PC-3 (cell line): ENCODE measurements at regions of chr1 and their contacts with region 1.

Region 1: DNA sequence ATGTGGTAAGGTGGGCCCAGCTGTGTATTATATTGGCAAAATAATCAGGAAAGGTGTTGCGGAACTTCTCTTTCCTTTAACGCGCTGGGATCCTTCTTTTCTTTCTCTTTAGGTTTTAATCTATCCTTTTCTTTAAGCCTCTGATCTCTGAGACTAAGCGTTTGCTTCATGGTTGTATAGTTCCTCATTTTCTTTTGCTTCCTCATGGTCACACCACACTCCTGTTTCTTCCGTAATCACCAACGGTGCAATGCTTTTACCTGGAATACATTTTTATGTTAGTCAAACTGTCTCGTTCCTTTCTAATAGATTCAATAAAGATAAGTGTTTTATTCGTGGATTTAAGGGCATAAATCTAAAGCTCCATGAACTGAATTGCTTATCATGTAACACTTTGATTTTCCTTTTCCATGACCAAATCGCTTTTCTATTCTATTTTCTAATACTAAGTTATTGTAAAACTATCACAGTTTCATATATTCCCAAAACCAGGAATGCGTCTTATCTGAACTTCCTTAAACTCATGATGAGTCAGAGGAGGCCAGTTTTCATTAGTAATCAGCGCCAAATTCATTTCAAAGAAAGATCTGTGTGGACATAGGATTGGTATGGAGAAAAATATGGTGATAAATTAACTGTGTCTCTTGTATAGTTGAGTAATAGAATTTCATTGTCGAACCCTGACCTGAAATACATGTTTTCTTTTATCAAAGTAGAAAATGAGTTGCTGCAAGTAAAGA is 12.2 kb downstream of the SDCCAG8 start:
- DNase-seq: peak; percentile 99
- ATAC-seq: peak; percentile 88
- H3K4me3 ChIP-seq: peak overlapping the region; percentile 50
- H3K27ac ChIP-seq: peak overlapping the region; percentile 87
- H3K4me1 ChIP-seq: peaks cover 46% of the 10 kb centered on the region
- H3K27me3 ChIP-seq: no peaks in the 10 kb centered on the region
- CTCF ChIP-seq: no peak

Region 2: GRCh38 chr1:243213045-243213787 is 54.9 kb before region 1 on chr1:
- CTCF ChIA-PET with region 1: no interaction called
- POLR2A ChIA-PET with region 1: no interaction called
- intact Hi-C with region 1: no loop called
- DNase-seq: no peak
- ATAC-seq: no peak
- H3K4me3 ChIP-seq: no peak overlapping the region
- H3K27ac ChIP-seq: no peak overlapping the region
- H3K4me1 ChIP-seq: no peaks in the 10 kb centered on the region
- H3K27me3 ChIP-seq: no peaks in the 10 kb centered on the region
- CTCF ChIP-seq: no peak

Region 3: GRCh38 chr1:243287652-243288051 is 19.6 kb after region 1 on chr1:
- CTCF ChIA-PET with region 1: no interaction called
- POLR2A ChIA-PET with region 1: no interaction called
- intact Hi-C with region 1: loop called (anchors 1 kb)
- DNase-seq: peak; percentile 91
- ATAC-seq: peak; percentile 94
- H3K4me3 ChIP-seq: 0 out of 2 replicates have a peak overlapping the region, but pooled peaks have one; percentile 0
- H3K27ac ChIP-seq: peak overlapping the region; percentile 67
- H3K4me1 ChIP-seq: peaks cover 29% of the 10 kb centered on the region
- H3K27me3 ChIP-seq: no peaks in the 10 kb centered on the region
- CTCF ChIP-seq: no peak

Region 4: DNA sequence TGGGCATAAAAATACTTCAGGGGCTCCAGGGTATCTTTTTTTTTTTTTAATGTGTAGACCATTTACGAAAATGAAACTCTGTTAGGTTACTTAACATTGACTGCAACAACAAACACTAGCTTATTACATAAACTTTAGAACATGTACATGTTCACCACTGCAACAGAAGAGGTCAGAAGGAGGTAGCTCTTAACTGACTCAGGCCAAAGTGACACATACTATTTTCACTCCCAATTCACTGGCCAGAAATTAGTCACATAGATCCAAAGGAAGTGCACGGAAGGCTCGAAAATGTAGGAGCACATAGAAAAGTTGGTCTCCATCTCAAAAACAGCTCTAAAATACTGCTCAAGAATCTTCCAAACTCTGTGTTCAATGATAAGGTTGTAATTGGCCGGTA is 474.7 kb after region 1 on chr1:
- CTCF ChIA-PET with region 1: no interaction called
- POLR2A ChIA-PET with region 1: no interaction called
- intact Hi-C with region 1: no loop called
- DNase-seq: peak; percentile 46
- ATAC-seq: no peak
- H3K4me3 ChIP-seq: no peak overlapping the region
- H3K27ac ChIP-seq: no peak overlapping the region
- H3K4me1 ChIP-seq: peaks cover 5% of the 10 kb centered on the region
- H3K27me3 ChIP-seq: no peaks in the 10 kb centered on the region
- CTCF ChIP-seq: no peak